HepG2 (cell line): ENCODE measurements at regions of chr13 and their contacts with region 1.

Region 1: GRCh38 chr13:45434556-45435371 is 16.6 kb upstream of the SLC25A30 start:
- DNase-seq: peak; percentile 89
- ATAC-seq: peak; percentile 71
- H3K4me3 ChIP-seq: peak overlapping the region; percentile 17 to 41 (median 20); a peak in 4 of 6 replicates
- H3K27ac ChIP-seq: peak overlapping the region; percentile 64
- H3K4me1 ChIP-seq: peaks cover 69% of the 10 kb centered on the region
- H3K27me3 ChIP-seq: no peaks in the 10 kb centered on the region
- CTCF ChIP-seq: no peak
- EP300 ChIP-seq: peak in 1 of 2 experiments; percentile 72; a peak in 2 of 4 replicates
- POLR2A ChIP-seq: peak; percentile 54 to 80; a peak in 3 of 4 replicates
- RAD21 ChIP-seq: no peak

Region 2: DNA sequence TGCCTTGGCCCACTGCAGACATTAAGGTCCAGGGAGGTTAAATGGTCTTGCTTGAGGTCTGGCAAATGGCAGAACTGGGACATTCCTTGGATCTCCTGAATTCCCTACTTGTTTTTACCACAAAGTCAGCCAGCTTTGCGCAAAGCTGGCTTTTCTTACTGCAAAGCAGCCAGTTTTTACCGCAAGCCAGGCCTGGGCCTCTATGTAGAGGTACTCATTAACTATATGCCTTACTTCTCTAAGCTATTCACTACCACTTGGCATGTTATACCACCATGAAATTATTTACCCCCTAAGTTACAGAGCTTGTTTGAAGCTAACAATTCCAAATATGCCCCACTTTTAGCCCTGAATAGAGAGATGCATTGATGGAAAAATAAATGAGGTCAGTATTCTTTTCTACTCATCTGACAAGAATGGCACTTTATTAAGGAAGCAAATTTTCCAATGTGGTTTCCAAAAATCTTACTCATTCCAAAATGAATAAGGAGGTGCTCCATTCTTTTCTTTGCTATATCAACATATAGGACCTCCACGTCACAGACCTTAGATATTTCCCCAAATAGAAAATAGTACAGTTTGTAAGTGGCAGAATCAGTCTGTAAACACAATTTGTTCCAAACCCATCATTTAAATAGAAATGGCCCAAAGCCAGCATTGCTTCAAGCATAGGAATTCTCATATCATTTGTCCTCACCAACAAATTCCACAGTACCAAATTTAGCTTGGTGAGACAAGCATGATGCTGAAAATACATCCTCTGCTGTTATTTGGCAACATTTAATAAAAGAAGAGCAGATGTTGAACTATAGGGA is 714.7 kb before region 1 on chr13:
- CTCF ChIA-PET with region 1: no interaction called
- POLR2A ChIA-PET with region 1: no interaction called
- in situ Hi-C with region 1: no loop called
- intact Hi-C with region 1: no loop called
- DNase-seq: no peak
- ATAC-seq: no peak
- H3K4me3 ChIP-seq: no peak overlapping the region
- H3K27ac ChIP-seq: no peak overlapping the region
- H3K4me1 ChIP-seq: no peaks in the 10 kb centered on the region
- H3K27me3 ChIP-seq: 0 out of 5 replicates have a peak, but pooled peaks cover 0 to 3% of the 10 kb centered on the region in 2 experiments
- CTCF ChIP-seq: no peak
- EP300 ChIP-seq: no peak
- POLR2A ChIP-seq: no peak
- RAD21 ChIP-seq: no peak

Region 3: GRCh38 chr13:45412274-45413049 is 22.3 kb before region 1 on chr13:
- CTCF ChIA-PET with region 1: no interaction called
- POLR2A ChIA-PET with region 1: interaction called, 43 read pairs
- in situ Hi-C with region 1: no loop called
- intact Hi-C with region 1: no loop called
- DNase-seq: no peak
- ATAC-seq: no peak
- H3K4me3 ChIP-seq: no peak overlapping the region
- H3K27ac ChIP-seq: no peak overlapping the region
- H3K4me1 ChIP-seq: peaks cover 45% of the 10 kb centered on the region
- H3K27me3 ChIP-seq: no peaks in the 10 kb centered on the region
- CTCF ChIP-seq: no peak
- EP300 ChIP-seq: no peak
- POLR2A ChIP-seq: no peak
- RAD21 ChIP-seq: no peak

Region 4: DNA sequence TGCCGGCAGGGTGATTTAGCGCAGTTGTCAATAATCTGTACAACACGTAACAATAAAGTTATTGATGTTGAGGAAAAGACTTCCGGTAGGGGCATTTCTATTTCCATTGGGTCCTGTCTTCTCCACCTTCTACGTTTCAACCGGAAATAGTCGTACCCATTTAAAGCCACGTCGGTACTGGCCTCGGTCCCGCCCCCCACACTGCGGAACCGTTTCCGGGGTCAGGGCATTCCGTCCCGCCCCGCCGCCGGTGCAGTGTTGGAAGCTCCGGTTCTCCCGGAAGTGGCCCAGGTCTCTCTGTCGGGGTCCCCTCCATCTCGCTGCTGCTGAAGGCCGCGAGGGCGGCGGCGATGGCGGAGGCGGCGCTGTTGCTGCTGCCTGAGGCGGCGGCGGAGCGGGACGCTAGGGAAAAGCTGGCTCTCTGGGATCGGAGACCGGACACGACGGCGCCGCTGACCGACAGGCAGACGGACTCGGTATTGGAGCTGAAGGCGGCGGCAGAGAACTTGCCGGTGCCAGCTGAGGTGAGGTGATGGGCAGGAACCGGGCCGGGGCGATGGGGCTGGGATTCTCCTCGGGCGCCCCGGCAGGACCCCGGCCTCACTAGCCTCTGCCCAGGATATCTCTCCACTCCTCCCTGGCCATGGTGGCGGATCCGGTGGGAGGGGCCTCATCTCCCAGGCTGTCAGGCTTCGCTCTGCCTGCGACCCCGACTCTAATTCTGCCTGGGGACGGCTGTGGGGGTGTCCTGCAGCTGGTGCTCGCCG is 30.1 kb after region 1 on chr13 and contains the start of gene COG3:
- CTCF ChIA-PET with region 1: no interaction called
- POLR2A ChIA-PET with region 1: interaction called, 31 read pairs
- in situ Hi-C with region 1: no loop called
- intact Hi-C with region 1: loop called (anchors 1 kb)
- DNase-seq: peak; percentile 99
- ATAC-seq: peak; percentile 95
- H3K4me3 ChIP-seq: peak within 1 kb of the TSS; percentile 76 to 96 (median 91)
- H3K27ac ChIP-seq: peak within 1 kb of the TSS; percentile 89
- H3K4me1 ChIP-seq: peaks cover 42% of the 10 kb centered on the region
- H3K27me3 ChIP-seq: no peaks in the 10 kb centered on the region; a peak in 1 of 5 replicates
- CTCF ChIP-seq: peak; percentile 47; the same call in 1 of the 2 replicates
- EP300 ChIP-seq: peak; percentile 20 to 34; a peak in 1 of 4 replicates
- POLR2A ChIP-seq: peak; percentile 71 to 75
- RAD21 ChIP-seq: no peak; the same call in 1 of the 2 replicates
- total RNA-seq, gene COG3: 47.5 and 47.8 TPM in 2 replicates